Ovary (tissue), 10 donors: ENCODE measurements at regions of chr9 and their contacts with region 1.

Region 1: DNA sequence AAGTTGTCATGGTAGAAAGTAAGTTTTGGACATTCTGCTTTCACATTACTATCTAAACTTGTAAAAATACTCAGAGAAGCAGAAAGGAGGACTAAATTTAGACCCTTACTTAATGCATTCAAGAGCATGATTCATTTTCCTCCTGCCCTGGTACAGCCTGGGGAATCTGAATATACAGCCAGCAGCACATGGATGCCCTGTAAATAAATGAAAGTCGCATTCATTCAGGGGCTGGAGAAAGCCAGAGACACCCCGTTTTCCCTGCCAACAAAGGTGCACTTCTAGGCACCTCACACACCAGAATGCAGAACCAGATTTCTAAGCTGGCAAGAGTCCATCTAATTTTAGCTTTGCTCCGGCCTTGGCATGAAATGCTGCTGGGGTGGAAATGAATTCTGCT is 172.7 kb upstream of the KLF9 start:
- DNase-seq: peak in 2 of 5 donors; percentile 28 to 38
- H3K4me3 ChIP-seq: no peak overlapping the region
- H3K27ac ChIP-seq: no peak overlapping the region
- H3K4me1 ChIP-seq: peaks cover 6% of the 10 kb centered on the region
- H3K27me3 ChIP-seq: no peaks in the 10 kb centered on the region
- CTCF ChIP-seq: no peak
- EP300 ChIP-seq: no peak
- POLR2A ChIP-seq: no peak

Region 2: GRCh38 chr9:70413798-70414775 is 173.1 kb before region 1 on chr9 and contains the start of gene KLF9:
- intact Hi-C with region 1: loop called in 1 of 4 experiments (anchors 5 kb)
- DNase-seq: peak; percentile 93 to 98 (median 94)
- H3K4me3 ChIP-seq: peak within 1 kb of the TSS; percentile 97
- H3K27ac ChIP-seq: peak within 1 kb of the TSS; percentile 98 to 100
- H3K4me1 ChIP-seq: peaks cover 7% of the 10 kb centered on the region
- H3K27me3 ChIP-seq: no peaks in the 10 kb centered on the region
- CTCF ChIP-seq: no peak
- EP300 ChIP-seq: peak; percentile 80
- POLR2A ChIP-seq: peak; percentile 92
- total RNA-seq, gene KLF9: 15.1 to 171 (median 91.0) TPM